Uterus (tissue), 4 donors: ENCODE measurements at regions of chr5 and their contacts with region 1.

Region 1: GRCh38 chr5:55724281-55724680 is 12.2 kb upstream of the SLC38A9 start:
- DNase-seq: no peak
- H3K4me3 ChIP-seq: no peak overlapping the region
- H3K27ac ChIP-seq: no peak overlapping the region
- H3K4me1 ChIP-seq: no peaks in the 10 kb centered on the region
- H3K27me3 ChIP-seq: no peaks in the 10 kb centered on the region
- CTCF ChIP-seq: no peak
- POLR2A ChIP-seq: no peak

Region 2: GRCh38 chr5:55771175-55771655 is 46.9 kb after region 1 on chr5:
- intact Hi-C with region 1: no loop called
- DNase-seq: no peak
- H3K4me3 ChIP-seq: no peak overlapping the region
- H3K27ac ChIP-seq: no peak overlapping the region
- H3K4me1 ChIP-seq: no peaks in the 10 kb centered on the region
- H3K27me3 ChIP-seq: no peaks in the 10 kb centered on the region
- CTCF ChIP-seq: no peak
- POLR2A ChIP-seq: no peak

Region 3: DNA sequence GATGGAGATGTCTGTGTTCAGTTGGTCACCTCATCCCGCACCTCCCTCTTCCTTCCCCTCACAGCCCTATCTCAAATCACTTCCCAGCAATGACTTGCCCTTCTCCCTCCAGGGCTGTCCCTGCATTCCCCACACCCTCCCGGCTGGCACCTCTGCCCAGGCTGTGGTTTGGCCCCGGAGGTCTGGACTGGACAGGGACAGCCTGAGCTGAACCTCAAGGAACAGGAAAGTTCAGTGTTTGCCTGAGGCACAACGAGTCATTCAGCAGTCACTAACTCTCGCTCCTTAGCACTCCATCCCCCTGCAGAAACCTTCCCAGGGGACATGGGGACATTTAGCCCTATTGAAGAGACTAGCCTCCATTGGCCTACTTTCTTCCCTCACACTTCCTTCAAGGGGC is 1032.8 kb after region 1 on chr5:
- intact Hi-C with region 1: loop called (anchors 10 kb)
- DNase-seq: no peak
- H3K4me3 ChIP-seq: no peak overlapping the region
- H3K27ac ChIP-seq: no peak overlapping the region
- H3K4me1 ChIP-seq: no peaks in the 10 kb centered on the region
- H3K27me3 ChIP-seq: no peaks in the 10 kb centered on the region
- CTCF ChIP-seq: no peak
- POLR2A ChIP-seq: no peak